ENCODE measurements at regions of chr3 and their contacts with region 1.

Region 1: GRCh38 chr3:16048435-16049318 is 125.8 kb upstream of the GALNT15 start:
- DNase-seq: no peak
- H3K4me3 ChIP-seq: no peak overlapping the region
- CTCF ChIP-seq: peak; percentile 60

Region 2: DNA sequence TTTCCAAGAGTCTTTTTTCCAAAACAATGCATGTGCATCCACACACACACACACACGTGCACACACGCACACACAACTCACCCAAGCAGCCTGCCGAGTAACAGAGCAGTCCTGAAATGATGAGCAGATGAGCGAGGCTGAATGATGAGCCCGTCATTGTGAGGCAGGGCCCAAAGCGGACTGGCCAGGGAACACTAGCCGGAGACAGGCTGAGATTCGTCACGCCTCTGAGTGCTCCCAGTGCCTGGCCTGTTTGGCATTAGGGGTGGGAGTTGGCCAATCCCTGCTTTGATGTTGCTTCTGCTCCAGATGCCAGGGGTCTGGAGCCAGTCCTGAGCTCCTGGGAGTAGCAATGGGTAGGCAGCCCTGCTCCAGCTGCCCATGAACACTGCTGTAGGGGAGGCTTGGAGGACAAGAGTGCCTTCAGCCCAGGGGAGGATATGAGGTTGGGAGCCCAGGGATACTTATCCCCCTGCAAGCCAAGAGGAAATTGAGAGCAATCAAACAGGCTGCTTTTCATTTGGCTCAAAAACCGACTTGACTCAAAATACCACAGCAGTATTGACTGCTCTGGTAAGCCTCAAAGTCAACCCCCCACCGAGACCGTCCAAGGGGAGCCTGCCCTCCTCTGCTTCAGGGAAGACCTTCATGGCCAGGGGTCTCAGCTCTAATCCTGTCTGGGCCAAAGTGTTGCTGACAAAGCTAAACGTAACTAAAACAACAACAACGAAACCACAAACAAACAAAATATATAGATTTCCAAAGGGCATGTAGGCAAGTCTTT is 550.1 kb before region 1 on chr3:
- CTCF ChIA-PET with region 1: no interaction called
- POLR2A ChIA-PET with region 1: no interaction called
- DNase-seq: no peak
- H3K4me3 ChIP-seq: no peak overlapping the region
- CTCF ChIP-seq: no peak

Region 3: GRCh38 chr3:16033889-16034687 is 14.6 kb before region 1 on chr3:
- CTCF ChIA-PET with region 1: interaction called, 12 read pairs
- POLR2A ChIA-PET with region 1: no interaction called
- DNase-seq: no peak
- H3K4me3 ChIP-seq: no peak overlapping the region
- CTCF ChIP-seq: no peak

Region 4: GRCh38 chr3:16069149-16069922 is 20.7 kb after region 1 on chr3:
- CTCF ChIA-PET with region 1: interaction called, 11 read pairs
- POLR2A ChIA-PET with region 1: no interaction called
- DNase-seq: peak; percentile 94
- H3K4me3 ChIP-seq: no peak overlapping the region
- CTCF ChIP-seq: no peak

Region 5: DNA sequence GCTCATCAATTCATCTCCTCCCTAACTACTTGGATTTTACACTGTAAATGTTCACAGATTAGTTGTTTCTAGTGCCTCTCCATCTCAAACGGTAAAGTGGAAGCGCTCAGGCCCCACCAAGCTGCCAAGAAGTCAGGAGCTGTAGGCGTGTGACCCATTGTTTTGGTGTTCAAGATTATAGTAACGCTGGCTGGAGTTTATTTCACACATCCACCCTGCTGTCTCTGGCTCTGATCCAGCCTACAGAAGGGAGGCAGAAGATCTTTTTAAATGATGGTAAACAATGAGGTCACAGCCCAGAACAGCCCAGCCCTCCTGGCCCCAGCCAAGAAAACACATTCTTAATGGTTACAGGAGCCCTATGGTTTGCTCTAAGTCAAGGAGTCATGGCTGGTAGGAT is 100.1 kb after region 1 on chr3:
- CTCF ChIA-PET with region 1: interaction called, 11 read pairs
- POLR2A ChIA-PET with region 1: no interaction called
- DNase-seq: peak; percentile 51
- H3K4me3 ChIP-seq: no peak overlapping the region
- CTCF ChIP-seq: no peak

Region 6: DNA sequence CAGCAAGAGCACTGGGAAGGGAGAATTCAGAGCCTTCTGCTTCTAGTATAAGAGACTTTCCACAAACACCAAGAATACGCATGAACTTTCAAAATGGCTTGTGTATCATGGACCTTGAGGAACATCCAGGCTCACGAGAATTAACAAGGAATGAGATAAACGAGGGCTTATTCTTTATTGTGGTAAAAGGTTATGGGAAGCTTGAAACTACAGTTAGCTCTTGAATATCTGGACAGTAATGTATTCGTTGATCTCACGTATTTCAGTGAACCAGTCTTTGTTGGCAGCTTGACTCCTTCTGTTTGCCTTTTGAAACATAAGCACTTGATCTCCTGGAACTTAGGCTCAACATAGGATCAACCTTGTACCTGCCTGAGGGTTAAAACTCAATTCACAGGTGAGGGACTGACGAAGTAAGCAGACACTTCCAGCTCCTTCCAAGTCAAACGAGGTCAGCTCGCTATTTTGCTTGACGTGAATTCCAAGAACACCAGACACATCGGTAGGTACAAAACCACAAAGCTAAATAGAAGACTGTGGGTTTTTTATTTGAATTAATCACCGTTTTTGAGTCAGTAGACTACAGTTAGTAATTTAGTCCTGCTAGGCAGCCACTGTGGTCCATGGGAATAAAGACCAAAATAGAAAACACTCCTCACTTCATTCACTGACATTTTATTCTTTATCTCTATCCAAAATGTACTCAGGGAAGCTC is 156.6 kb after region 1 on chr3:
- CTCF ChIA-PET with region 1: interaction called, 25 read pairs
- POLR2A ChIA-PET with region 1: no interaction called
- DNase-seq: no peak
- H3K4me3 ChIP-seq: no peak overlapping the region
- CTCF ChIP-seq: no peak

Region 7: DNA sequence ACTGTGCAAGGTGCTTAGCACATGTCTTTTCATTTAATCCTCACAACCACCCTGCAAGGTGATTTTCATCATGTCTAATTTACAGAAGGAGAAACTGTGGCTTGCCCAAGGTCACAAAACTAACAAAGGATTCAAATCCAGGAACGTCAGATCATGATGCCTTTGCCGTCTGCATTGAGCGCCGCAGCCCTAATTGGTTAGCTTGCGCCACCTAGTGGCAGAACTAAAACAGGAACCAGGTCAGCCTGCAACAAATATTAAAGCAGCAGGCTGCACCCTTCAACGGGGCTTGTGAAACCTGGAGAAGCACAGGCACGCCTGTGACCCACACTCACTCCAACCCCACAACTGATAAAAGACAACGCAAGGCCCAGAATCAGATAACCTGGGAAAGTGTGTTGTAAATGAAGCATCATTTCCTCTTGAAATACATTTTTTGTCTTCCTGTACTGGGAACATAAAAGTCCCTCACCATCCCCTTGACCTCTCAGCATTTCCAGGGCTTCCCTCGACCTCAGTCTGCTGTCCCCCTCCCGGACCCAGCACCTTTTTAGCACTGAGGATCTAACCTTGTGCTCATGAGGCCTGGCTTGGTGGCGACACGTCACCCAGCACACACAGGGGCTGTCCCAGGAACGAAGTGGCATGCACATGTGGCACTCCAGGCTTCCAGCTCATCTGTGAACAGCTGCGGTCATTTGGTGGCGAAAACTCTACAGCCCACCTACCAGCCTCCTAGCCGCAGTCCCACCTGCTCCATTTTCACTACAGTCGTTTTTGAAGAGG is 198.8 kb after region 1 on chr3:
- CTCF ChIA-PET with region 1: interaction called, 86 read pairs
- POLR2A ChIA-PET with region 1: no interaction called
- DNase-seq: peak; percentile 31
- H3K4me3 ChIP-seq: no peak overlapping the region
- CTCF ChIP-seq: peak; percentile 82

Region 8: DNA sequence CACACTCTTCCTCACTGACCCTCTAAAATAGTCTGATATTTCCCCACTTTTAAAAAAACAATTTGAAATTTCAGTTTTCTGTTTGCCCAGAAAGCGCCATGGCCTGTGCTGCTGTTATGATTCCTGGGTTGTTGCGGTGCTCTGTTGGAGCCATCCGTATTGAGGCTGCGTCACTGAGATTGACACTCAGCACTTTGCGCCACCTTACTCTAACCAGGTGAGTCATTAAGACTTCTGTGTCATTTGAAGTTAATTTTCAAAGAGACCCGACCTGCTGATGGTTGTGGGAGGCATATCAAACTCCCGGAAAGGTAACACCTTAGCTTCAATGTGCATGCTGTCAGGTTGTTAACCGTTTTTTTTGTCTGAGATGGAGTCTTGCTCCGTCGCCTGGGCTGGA is 222.2 kb after region 1 on chr3:
- CTCF ChIA-PET with region 1: no interaction called
- POLR2A ChIA-PET with region 1: no interaction called
- DNase-seq: no peak
- H3K4me3 ChIP-seq: no peak overlapping the region
- CTCF ChIP-seq: no peak

Region 9: DNA sequence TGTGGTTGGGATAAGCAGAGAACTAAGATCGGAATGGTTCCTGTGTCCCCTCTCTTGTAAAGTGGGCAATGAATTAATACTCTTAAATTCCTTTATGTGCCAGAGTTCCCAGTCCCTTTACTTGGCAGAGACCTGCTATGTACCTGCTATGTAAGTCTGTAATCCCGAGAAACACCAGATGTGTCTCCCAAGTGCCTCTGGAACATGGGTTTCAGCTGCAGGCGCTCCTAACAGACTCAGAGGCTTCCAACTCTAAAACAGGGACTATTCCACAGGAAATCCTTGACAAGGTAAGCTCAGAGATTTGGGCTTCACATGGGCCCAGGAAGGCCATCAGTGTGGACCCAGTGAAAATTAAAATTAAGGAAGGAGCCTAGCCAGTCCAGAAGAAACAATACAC is 718.3 kb after region 1 on chr3:
- CTCF ChIA-PET with region 1: no interaction called
- POLR2A ChIA-PET with region 1: no interaction called
- DNase-seq: no peak
- H3K4me3 ChIP-seq: no peak overlapping the region
- CTCF ChIP-seq: no peak

Region 10: GRCh38 chr3:16982460-16982859 is 933.8 kb after region 1 on chr3:
- CTCF ChIA-PET with region 1: no interaction called
- POLR2A ChIA-PET with region 1: no interaction called
- DNase-seq: no peak
- H3K4me3 ChIP-seq: no peak overlapping the region
- CTCF ChIP-seq: no peak